ENCODE measurements at regions of chr6 and their contacts with region 1.

Region 1: GRCh38 chr6:75208298-75209183 is 2.7 kb upstream of the COL12A1 start:
- H3K4me3 ChIP-seq: no peak overlapping the region
- H3K27ac ChIP-seq: no peak overlapping the region
- H3K4me1 ChIP-seq: peaks cover 12% of the 10 kb centered on the region
- CTCF ChIP-seq: peak; percentile 78

Region 2: GRCh38 chr6:73739096-73739495 is 1469.4 kb before region 1 on chr6:
- CTCF ChIA-PET with region 1: interaction called, 92 read pairs
- POLR2A ChIA-PET with region 1: no interaction called
- H3K4me3 ChIP-seq: no peak overlapping the region
- H3K27ac ChIP-seq: no peak overlapping the region
- H3K4me1 ChIP-seq: no peaks in the 10 kb centered on the region
- CTCF ChIP-seq: peak; percentile 33; the same call in 1 of the 2 replicates

Region 3: GRCh38 chr6:74091136-74091793 is 1117.3 kb before region 1 on chr6:
- CTCF ChIA-PET with region 1: interaction called, 41 read pairs
- POLR2A ChIA-PET with region 1: no interaction called
- H3K4me3 ChIP-seq: no peak overlapping the region
- H3K27ac ChIP-seq: no peak overlapping the region
- H3K4me1 ChIP-seq: no peaks in the 10 kb centered on the region
- CTCF ChIP-seq: no peak

Region 4: DNA sequence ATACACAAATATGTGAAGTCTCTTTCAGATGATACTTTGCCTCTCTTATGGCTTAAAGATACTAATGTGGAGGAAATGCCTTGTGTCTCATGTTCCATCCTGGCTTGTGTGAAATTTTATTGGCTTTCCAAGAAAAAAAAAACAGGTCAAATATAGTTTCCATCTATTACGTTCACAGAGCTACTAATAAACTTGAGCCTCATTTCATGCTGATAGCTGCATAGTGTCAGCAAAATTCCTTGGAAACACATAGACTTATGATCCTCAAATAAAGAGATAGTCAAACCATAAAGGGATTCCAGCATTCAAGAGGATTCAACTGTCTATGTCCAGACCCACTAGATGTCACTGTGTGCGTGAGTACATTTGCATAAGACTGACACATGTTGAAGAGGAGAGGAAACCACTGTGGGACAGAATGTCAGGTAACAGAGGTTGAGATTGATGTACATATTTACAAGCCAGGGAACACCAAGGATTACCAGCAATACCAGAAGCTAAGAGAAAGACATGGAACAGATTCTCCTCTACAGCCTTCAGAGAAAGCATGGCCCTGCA is 269.3 kb before region 1 on chr6:
- CTCF ChIA-PET with region 1: interaction called, 12 read pairs
- POLR2A ChIA-PET with region 1: no interaction called
- H3K4me3 ChIP-seq: no peak overlapping the region
- H3K27ac ChIP-seq: no peak overlapping the region
- H3K4me1 ChIP-seq: no peaks in the 10 kb centered on the region
- CTCF ChIP-seq: 0 out of 2 replicates have a peak, but pooled peaks have one; percentile 14

Region 5: DNA sequence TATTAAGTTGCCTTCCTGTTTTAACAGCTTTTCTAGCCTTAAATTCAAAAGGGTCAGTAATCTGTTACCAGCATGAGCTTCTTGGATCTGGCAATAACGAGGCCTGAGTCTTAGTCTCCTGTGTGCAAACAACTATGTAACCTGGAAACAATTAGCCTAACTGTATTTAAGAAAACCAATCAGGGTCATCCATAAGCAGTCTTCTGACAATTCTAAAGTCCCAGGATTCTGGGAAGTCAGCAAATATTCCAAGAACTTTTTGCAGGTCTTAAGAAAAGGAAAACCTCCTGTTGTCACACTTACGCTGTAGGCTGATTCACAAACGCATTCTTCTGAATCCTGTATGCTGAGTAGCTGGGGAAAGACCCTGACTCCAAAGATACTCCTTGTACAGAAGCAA is 93.1 kb before region 1 on chr6:
- CTCF ChIA-PET with region 1: interaction called, 13 read pairs
- POLR2A ChIA-PET with region 1: no interaction called
- H3K4me3 ChIP-seq: no peak overlapping the region
- H3K27ac ChIP-seq: no peak overlapping the region
- H3K4me1 ChIP-seq: no peaks in the 10 kb centered on the region
- CTCF ChIP-seq: no peak

Region 6: GRCh38 chr6:75236630-75237029 is 28.1 kb after region 1 on chr6:
- CTCF ChIA-PET with region 1: interaction called, 106 read pairs
- POLR2A ChIA-PET with region 1: no interaction called
- H3K4me3 ChIP-seq: no peak overlapping the region
- H3K27ac ChIP-seq: no peak overlapping the region
- H3K4me1 ChIP-seq: no peaks in the 10 kb centered on the region
- CTCF ChIP-seq: no peak